ENCODE measurements at regions of chr14 and their contacts with region 1.

Region 1: GRCh38 chr14:20343092-20343861 is at the start of gene PARP2:
- DNase-seq: peak; percentile 100
- H3K4me3 ChIP-seq: peak within 1 kb of the TSS; percentile 78 to 95 (median 78)
- H3K27ac ChIP-seq: peak within 1 kb of the TSS; percentile 85
- H3K4me1 ChIP-seq: peaks cover 11% of the 10 kb centered on the region
- H3K27me3 ChIP-seq: no peaks in the 10 kb centered on the region
- CTCF ChIP-seq: no peak
- POLR2A ChIP-seq: peak; percentile 100
- total RNA-seq, gene PARP2: 30.6 and 30.8 TPM in 2 replicates

Region 2: DNA sequence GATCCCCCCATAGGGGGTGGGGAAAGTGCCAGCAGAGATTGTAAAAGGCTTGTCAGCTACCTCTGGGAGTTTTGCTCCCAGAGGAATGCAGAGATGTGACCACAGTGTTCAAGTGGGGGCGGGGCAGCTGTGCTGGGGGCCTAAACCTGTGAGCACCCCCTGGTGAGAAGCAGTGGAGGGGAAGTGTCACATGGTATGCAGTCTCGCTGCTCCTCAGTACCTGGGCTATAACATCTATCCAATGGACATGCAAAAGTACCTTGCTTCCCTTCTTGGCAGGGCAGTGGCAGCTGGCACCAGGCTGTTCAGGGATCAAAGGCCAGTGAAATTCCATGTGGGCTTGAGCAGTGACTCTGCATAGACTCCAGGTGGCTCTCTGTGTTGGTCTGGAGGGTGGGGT is 448.0 kb before region 1 on chr14:
- CTCF ChIA-PET with region 1: no interaction called
- POLR2A ChIA-PET with region 1: no interaction called
- dilution Hi-C with region 1: no loop called
- intact Hi-C with region 1: no loop called
- DNase-seq: no peak
- H3K4me3 ChIP-seq: no peak overlapping the region
- H3K27ac ChIP-seq: no peak overlapping the region
- H3K4me1 ChIP-seq: no peaks in the 10 kb centered on the region
- H3K27me3 ChIP-seq: no peaks in the 10 kb centered on the region
- CTCF ChIP-seq: no peak
- POLR2A ChIP-seq: no peak

Region 3: GRCh38 chr14:19947413-19948090 is 395.7 kb before region 1 on chr14:
- CTCF ChIA-PET with region 1: no interaction called
- POLR2A ChIA-PET with region 1: no interaction called
- dilution Hi-C with region 1: no loop called
- intact Hi-C with region 1: no loop called
- DNase-seq: no peak
- H3K4me3 ChIP-seq: no peak overlapping the region
- H3K27ac ChIP-seq: no peak overlapping the region
- H3K4me1 ChIP-seq: no peaks in the 10 kb centered on the region
- H3K27me3 ChIP-seq: no peaks in the 10 kb centered on the region
- CTCF ChIP-seq: no peak
- POLR2A ChIP-seq: no peak

Region 4: GRCh38 chr14:20035449-20035848 is 307.8 kb before region 1 on chr14:
- CTCF ChIA-PET with region 1: no interaction called
- POLR2A ChIA-PET with region 1: no interaction called
- dilution Hi-C with region 1: no loop called
- intact Hi-C with region 1: no loop called
- DNase-seq: no peak
- H3K4me3 ChIP-seq: no peak overlapping the region
- H3K27ac ChIP-seq: no peak overlapping the region
- H3K4me1 ChIP-seq: no peaks in the 10 kb centered on the region
- H3K27me3 ChIP-seq: no peaks in the 10 kb centered on the region
- CTCF ChIP-seq: no peak
- POLR2A ChIP-seq: no peak

Region 5: DNA sequence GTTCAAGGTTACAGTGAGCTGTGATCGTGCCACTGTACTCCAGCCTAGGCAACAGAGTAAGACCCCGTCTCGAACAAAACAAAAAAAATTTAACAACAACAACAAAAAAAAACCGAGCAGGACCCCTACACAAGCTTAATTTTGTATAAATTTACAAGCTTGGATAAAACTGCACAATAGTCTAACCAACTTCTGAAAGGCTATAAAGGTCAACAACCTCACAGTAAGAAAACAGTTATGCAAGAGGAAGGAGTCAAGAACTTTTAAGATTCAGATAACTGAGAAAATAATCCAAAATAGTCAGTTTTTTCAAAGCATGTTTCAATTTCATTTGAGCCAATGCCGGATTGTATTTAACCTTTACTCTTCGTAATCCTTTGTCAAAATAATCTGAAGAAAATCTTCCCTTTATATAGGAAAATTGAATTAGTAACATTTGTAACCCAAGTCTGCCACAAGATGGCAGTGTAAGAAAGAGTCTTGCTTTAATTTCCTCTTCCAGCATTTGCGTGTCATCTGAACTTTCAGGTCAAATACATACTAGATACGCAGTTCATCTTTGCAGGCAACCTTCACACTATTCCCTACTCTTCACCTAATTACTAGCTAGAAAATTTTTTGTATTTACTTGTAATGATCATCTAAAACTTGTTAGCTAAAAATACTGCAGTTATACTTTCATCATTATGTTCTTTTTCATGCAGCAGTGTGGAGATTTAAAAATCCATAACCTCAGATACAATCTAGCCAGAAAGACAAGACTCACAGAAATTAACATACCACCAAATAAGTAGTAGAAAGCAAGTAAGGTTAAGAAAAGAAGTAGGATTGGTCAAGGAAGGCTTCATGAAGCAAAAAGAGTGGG is 16.0 kb before region 1 on chr14:
- CTCF ChIA-PET with region 1: interaction called, 73 read pairs
- POLR2A ChIA-PET with region 1: interaction called, 30 read pairs
- dilution Hi-C with region 1: no loop called
- intact Hi-C with region 1: no loop called
- DNase-seq: peak; percentile 75
- H3K4me3 ChIP-seq: no peak overlapping the region
- H3K27ac ChIP-seq: no peak overlapping the region
- H3K4me1 ChIP-seq: peaks cover 18% of the 10 kb centered on the region
- H3K27me3 ChIP-seq: no peaks in the 10 kb centered on the region
- CTCF ChIP-seq: peak; percentile 42 to 56
- POLR2A ChIP-seq: no peak

Region 6: GRCh38 chr14:20332788-20333493 is 10.3 kb before region 1 on chr14 and contains the start of gene CCNB1IP1:
- CTCF ChIA-PET with region 1: interaction called, 73 read pairs
- POLR2A ChIA-PET with region 1: interaction called, 30 read pairs
- dilution Hi-C with region 1: no loop called
- intact Hi-C with region 1: loop called (anchors 1 kb)
- DNase-seq: peak; percentile 87
- H3K4me3 ChIP-seq: peak within 1 kb of the TSS; percentile 48 to 93 (median 65)
- H3K27ac ChIP-seq: peak within 1 kb of the TSS; percentile 71
- H3K4me1 ChIP-seq: peaks cover 19% of the 10 kb centered on the region
- H3K27me3 ChIP-seq: no peaks in the 10 kb centered on the region
- CTCF ChIP-seq: no peak
- POLR2A ChIP-seq: peak; percentile 69
- total RNA-seq, gene CCNB1IP1: 35.5 and 38.9 TPM in 2 replicates

Region 7: DNA sequence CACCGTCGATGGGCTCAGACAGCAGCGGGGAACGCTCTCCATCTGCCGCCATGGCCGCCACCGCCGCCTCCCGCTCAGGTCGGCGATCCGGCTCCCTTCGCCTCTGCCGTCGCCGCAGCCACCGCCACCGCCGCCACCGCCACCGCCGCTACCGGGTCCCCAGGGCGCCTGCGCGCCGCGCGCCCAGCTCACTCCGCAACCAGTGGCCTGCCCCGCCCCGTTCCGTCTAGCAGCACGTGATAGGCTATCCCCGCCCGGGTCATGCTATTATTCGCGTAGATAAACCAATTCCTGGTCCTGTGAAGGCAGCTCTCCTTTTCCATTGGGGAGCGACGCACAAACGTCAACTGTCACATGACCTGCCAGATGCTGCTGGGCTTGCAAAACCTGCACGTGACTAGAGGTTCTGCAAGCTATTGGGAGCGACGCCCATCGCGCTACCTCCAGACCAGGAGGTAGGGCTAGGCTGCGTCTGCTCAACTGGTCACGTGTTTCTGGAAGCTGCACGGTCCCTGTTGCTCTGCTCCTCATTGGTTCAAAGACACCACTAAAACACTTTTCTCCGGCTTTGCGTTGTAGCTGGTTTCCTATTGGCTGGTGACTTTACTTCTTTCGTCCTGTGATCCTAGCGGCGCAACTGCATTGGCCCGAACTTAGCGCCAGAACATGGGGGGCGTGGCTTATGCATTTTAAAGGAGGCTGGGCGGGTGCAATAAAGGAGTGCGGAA is 118.2 kb after region 1 on chr14 and contains the start of gene PIP4P1:
- CTCF ChIA-PET with region 1: interaction called, 3 read pairs
- POLR2A ChIA-PET with region 1: interaction called, 37 read pairs
- dilution Hi-C with region 1: no loop called
- intact Hi-C with region 1: no loop called
- DNase-seq: peak; percentile 100
- H3K4me3 ChIP-seq: peak within 1 kb of the TSS; percentile 43 to 78 (median 66)
- H3K27ac ChIP-seq: peak within 1 kb of the TSS; percentile 35
- H3K4me1 ChIP-seq: peaks cover 18% of the 10 kb centered on the region
- H3K27me3 ChIP-seq: peaks cover 2 to 8% of the 10 kb centered on the region in 2 experiments
- CTCF ChIP-seq: no peak
- POLR2A ChIP-seq: no peak
- total RNA-seq, gene PIP4P1: 28.6 and 33.6 TPM in 2 replicates

Region 8: DNA sequence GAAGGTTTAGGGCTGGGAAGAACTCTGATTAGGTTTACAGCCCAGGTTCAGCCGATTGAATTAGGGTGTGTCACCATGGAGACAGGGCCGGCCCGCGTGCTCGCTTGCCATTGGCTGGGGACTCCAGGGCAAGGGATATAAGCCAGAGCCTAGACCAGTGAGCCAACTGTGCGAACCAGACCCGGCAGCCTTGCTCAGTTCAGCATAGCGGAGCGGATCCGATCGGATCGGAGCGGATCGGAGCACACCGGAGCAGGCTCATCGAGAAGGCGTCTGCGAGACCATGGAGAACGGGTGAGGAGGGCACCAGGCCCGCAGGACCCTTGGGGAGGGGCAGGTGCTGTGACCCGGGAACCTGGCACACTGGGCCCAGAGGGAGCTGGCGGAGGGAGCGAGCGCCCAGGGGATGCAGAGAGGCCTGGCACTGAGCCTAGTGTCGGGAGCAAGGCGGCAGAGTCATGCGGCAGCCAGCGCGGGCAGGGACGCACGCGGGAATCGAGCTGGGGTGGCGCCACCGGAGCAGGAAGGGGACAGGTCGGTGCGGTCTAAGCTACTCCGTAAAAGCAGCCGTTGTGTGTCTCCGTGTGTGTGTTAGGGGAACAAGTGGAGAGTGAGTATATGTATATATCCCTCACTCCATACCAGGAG is 126.1 kb after region 1 on chr14 and contains the start of gene PNP:
- CTCF ChIA-PET with region 1: interaction called, 3 read pairs
- POLR2A ChIA-PET with region 1: interaction called, 13 read pairs
- dilution Hi-C with region 1: no loop called
- intact Hi-C with region 1: no loop called
- DNase-seq: peak; percentile 89
- H3K4me3 ChIP-seq: peak within 1 kb of the TSS; percentile 60 to 94 (median 77)
- H3K27ac ChIP-seq: peak within 1 kb of the TSS; percentile 76
- H3K4me1 ChIP-seq: peaks cover 24% of the 10 kb centered on the region
- H3K27me3 ChIP-seq: peaks cover 2 to 6% of the 10 kb centered on the region in 2 experiments
- CTCF ChIP-seq: no peak
- POLR2A ChIP-seq: peak; percentile 99
- total RNA-seq, gene PNP: 189 and 271 TPM in 2 replicates

Region 9: DNA sequence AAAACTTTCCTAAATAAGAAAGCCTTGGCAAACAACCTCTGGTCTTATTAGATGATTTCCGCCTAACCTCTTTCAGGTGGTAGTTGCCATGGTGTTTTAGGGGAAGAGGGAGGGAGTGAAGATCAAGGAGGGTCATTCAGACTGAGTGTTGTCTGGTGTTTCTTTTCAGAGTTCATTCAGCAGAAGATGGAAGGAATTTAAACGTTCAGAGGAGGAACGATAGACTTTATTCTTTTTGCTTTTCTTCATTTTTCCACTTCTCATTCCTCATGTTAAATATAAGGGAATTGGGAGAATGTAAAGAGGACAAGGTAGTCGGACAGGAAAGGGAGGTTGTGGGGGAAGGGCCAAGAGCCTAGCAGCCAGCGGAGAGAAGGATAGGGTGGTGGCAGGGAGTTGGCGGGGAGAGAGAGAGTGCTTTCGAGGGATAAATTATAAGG is 1200.3 kb after region 1 on chr14:
- CTCF ChIA-PET with region 1: no interaction called
- POLR2A ChIA-PET with region 1: interaction called, 10 read pairs
- dilution Hi-C with region 1: no loop called
- intact Hi-C with region 1: no loop called
- DNase-seq: no peak
- H3K4me3 ChIP-seq: no peak overlapping the region
- H3K27ac ChIP-seq: no peak overlapping the region
- H3K4me1 ChIP-seq: no peaks in the 10 kb centered on the region
- H3K27me3 ChIP-seq: peaks cover 9 to 19% of the 10 kb centered on the region in 2 experiments
- CTCF ChIP-seq: no peak
- POLR2A ChIP-seq: no peak